ENCODE measurements at regions of chr10 and their contacts with region 1.

Region 1: DNA sequence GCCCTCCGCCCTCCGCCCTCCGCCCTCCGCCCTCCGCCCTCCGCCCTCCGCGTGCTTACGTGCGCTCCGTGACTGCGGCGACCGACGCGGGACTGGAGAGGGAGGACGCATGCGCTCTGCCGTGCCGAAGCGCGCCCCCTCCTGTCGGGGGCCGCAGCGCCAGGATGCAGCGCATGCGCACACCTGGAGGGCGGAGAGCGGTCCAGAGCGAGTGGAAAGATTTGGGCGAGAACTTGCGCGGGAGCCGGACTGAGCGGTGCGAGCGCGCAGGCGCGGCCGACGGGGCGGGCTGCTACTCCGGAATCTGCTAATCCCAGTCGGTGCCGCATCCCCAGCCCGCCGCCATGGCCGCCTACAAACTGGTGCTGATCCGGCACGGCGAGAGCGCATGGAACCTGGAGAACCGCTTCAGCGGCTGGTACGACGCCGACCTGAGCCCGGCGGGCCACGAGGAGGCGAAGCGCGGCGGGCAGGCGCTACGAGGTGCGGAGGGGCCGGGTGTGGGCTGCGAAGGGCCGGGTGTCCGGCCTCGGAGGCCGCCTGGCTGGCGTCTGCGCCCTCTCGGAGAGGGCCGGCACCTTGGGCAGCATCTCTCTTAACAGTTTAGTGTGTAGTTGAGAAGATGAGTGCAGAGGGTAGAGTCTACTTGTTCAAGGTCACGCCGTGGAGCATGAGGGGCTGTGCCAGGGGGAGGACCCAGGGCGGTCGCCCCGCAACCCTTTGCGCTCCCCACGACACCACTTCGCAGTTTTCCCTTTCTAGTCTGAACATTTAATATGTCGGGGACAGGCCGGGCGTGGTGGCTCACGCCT is at the start of gene PGAM1:
- DNase-seq: peak; percentile 94 to 99 (median 98)
- H3K4me3 ChIP-seq: peak within 1 kb of the TSS; percentile 62 to 70
- H3K4me3 Mint-ChIP-seq: peak within 1 kb of the TSS; percentile 90 to 98 (median 94)
- H3K27ac ChIP-seq: peak within 1 kb of the TSS; percentile 83
- H3K27ac Mint-ChIP-seq: peak within 1 kb of the TSS; percentile 94 to 98 (median 97)
- H3K4me1 ChIP-seq: peaks cover 42% of the 10 kb centered on the region
- H3K4me1 Mint-ChIP-seq: peaks cover 26 to 61% (median 37%) of the 10 kb centered on the region in 4 donors
- H3K27me3 ChIP-seq: no peaks in the 10 kb centered on the region
- H3K27me3 Mint-ChIP-seq: peaks cover 0 to 2% of the 10 kb centered on the region in 2 donors
- total RNA-seq, gene PGAM1: 95.7 to 102 TPM

Region 2: GRCh38 chr10:97318772-97319651 is 107.2 kb before region 1 on chr10 and contains the start of gene FRAT1:
- CTCF ChIA-PET with region 1: no interaction called
- POLR2A ChIA-PET with region 1: interaction called, 10 read pairs
- intact Hi-C with region 1: no loop called
- DNase-seq: peak; percentile 90 to 97 (median 94)
- H3K4me3 ChIP-seq: peak within 1 kb of the TSS; percentile 50 to 84
- H3K4me3 Mint-ChIP-seq: peak within 1 kb of the TSS; percentile 93 to 99 (median 96)
- H3K27ac ChIP-seq: peak within 1 kb of the TSS; percentile 99
- H3K27ac Mint-ChIP-seq: peak within 1 kb of the TSS; percentile 96 to 100 (median 99)
- H3K4me1 ChIP-seq: peaks cover 21% of the 10 kb centered on the region
- H3K4me1 Mint-ChIP-seq: peaks cover 16 to 44% (median 31%) of the 10 kb centered on the region in 4 donors
- H3K27me3 ChIP-seq: no peaks in the 10 kb centered on the region
- H3K27me3 Mint-ChIP-seq: peaks cover 0 to 3% of the 10 kb centered on the region in 2 donors
- total RNA-seq, gene FRAT1: 20.2 to 21.8 TPM

Region 3: DNA sequence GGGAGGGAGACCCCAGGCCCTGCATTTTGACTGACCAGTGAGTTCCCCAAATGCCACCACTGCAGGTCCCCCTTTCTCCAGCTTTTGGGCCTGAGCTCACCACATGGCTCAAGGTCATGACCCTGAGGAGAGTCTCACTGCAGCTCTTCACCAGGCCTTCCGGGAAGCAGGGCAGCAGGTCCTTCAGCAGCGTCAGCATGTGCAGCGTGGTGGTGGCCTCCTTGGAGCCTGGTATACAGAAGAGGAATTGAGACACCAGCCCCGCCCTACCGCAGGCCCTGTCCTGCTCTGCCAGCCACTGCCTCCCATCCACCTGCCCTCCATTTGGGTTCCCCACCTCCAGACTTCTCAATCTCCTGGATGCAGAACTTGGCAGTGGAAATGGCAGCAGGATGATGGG is 38.0 kb before region 1 on chr10:
- CTCF ChIA-PET with region 1: no interaction called
- POLR2A ChIA-PET with region 1: no interaction called
- intact Hi-C with region 1: no loop called
- DNase-seq: no peak
- H3K4me3 ChIP-seq: no peak overlapping the region
- H3K4me3 Mint-ChIP-seq: no peak overlapping the region
- H3K27ac ChIP-seq: no peak overlapping the region
- H3K27ac Mint-ChIP-seq: no peak overlapping the region
- H3K4me1 ChIP-seq: no peaks in the 10 kb centered on the region
- H3K4me1 Mint-ChIP-seq: no peaks in the 10 kb centered on the region
- H3K27me3 ChIP-seq: no peaks in the 10 kb centered on the region
- H3K27me3 Mint-ChIP-seq: no peaks in the 10 kb centered on the region

Region 4: DNA sequence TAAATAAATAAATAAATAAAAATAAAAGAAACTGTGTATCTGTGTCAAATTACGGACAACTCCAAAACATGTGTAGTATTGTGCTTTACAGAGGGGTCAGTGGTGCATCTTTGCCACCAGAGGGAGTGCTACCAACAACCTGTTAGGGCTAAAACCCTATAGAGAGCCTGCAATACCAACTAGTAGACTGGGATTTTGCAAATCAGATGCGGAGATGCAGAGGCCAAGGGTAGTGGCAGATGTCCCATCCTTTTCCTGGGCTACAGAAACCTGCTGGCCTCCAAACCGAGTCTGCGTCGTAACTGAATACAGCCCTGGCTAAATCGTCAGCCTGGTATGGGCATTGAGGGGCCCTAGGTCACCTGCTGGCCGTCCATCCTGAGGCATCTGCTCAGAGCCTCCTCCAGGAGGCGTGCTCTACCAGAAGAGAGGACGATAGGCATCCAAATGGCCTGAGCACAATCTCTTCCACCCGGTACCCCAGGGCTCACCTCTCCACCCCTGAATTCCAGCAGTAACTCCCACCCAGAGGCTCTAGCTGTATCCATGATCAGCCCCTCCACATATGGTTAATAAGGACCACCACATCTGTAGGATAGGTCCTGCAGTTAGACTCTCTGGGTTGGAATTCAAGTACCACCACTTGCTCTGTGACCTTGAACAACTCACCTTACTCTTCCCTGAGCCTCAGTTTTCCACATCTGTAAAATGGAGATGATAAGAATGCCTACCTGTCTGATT is 18.8 kb before region 1 on chr10:
- CTCF ChIA-PET with region 1: interaction called, 75 read pairs
- POLR2A ChIA-PET with region 1: interaction called, 7 read pairs
- intact Hi-C with region 1: loop called (anchors 1 kb)
- DNase-seq: peak; percentile 74 to 78 (median 77)
- H3K4me3 ChIP-seq: peak overlapping the region; percentile 35 to 48
- H3K4me3 Mint-ChIP-seq: peak overlapping the region in 7 of 8 donors; percentile 36 to 77 (median 74)
- H3K27ac ChIP-seq: no peak overlapping the region
- H3K27ac Mint-ChIP-seq: peak overlapping the region; percentile 54 to 88 (median 78)
- H3K4me1 ChIP-seq: peaks cover 6% of the 10 kb centered on the region
- H3K4me1 Mint-ChIP-seq: peaks cover 3 to 12% (median 9%) of the 10 kb centered on the region in 4 donors
- H3K27me3 ChIP-seq: no peaks in the 10 kb centered on the region
- H3K27me3 Mint-ChIP-seq: no peaks in the 10 kb centered on the region

Region 5: DNA sequence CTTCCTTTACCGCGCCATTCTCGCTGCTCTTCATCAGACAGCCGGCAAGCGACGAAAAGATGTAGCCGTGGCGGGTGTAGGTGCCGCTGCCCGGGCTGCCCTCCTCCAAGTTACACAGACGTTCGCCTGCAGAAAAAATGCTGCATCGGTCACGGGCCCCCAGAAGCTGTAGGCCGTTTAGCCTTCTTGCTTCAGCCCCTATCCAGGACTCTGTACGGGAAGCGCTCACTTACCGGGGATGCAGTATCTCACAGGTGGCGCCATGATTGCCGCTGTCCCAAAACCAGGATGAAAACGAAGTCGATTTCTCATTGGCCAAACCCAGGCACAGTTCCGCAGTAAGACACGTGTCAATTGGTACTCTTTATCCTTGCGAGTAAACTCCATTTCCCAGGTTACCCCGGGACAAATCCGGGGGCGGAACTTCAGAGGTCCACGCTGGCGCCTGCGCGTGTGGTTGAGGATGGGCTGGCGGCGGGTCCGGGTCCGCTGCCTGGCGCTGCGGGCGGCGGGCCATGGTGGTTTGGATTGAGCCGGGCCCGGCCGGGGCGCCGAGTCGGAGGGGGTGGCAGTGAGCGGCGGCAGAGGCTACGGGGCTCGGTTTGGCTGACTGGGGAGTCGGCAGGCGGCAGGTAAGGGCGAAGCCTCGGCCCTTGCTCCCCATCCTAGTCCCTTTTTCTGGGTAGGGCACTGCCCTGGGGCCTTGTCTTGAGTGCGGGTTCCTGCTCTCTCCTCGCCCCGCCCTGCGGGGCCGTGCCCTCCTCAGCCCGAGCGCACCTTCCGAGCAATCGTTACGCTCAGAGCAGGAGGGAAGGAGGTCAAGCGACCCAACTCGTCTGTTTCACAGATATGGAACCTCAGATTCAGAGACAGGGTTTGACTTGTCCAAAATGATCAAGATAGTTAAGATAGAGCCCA is 19.8 kb after region 1 on chr10 and contains the starts of genes EXOSC1 and ZDHHC16:
- CTCF ChIA-PET with region 1: interaction called, 3 read pairs
- POLR2A ChIA-PET with region 1: interaction called, 7 read pairs
- intact Hi-C with region 1: loop called (anchors 1 kb)
- DNase-seq: peak; percentile 88 to 95 (median 89)
- H3K4me3 ChIP-seq: peak within 1 kb of the TSS; percentile 79 to 93
- H3K4me3 Mint-ChIP-seq: peak within 1 kb of the TSS; percentile 97 to 100 (median 99)
- H3K27ac ChIP-seq: peak within 1 kb of the TSS; percentile 80
- H3K27ac Mint-ChIP-seq: peak within 1 kb of the TSS; percentile 86 to 97 (median 95)
- H3K4me1 ChIP-seq: peaks cover 40% of the 10 kb centered on the region
- H3K4me1 Mint-ChIP-seq: peaks cover 23 to 59% (median 48%) of the 10 kb centered on the region in 4 donors
- H3K27me3 ChIP-seq: no peaks in the 10 kb centered on the region
- H3K27me3 Mint-ChIP-seq: no peaks in the 10 kb centered on the region
- total RNA-seq, gene EXOSC1: 60.6 to 62.7 TPM
- total RNA-seq, gene ZDHHC16: 29.6 to 29.7 TPM

Measured in CD4-positive, alpha-beta memory T cell (primary cell).